ENCODE measurements at regions of chr13 and their contacts with region 1.

Region 1: DNA sequence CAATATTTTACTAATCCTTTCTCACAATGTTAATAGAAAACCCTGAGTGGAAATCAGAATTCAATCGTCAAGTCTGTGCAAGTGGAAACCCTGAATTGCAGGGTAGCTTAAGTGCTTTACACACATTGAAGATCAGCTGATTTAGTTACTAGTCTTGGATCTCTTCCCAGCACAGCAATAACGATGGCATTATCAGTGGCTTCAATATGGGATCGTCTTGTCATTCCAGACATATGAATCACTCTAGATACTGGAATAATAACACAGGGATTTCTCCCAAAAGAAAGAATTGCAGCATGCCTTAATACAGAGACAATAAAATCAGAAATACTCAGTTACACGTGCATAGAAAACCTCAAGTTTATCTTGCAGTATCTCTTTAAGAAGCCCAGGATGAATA is 12.6 kb upstream of the METTL21C start:
- DNase-seq: no peak
- ATAC-seq: no peak
- H3K4me3 ChIP-seq: no peak overlapping the region
- H3K27ac ChIP-seq: no peak overlapping the region
- H3K4me1 ChIP-seq: no peaks in the 10 kb centered on the region
- H3K27me3 ChIP-seq: no peaks in the 10 kb centered on the region; a peak in 1 of 5 replicates
- CTCF ChIP-seq: no peak
- EP300 ChIP-seq: no peak
- POLR2A ChIP-seq: no peak
- RAD21 ChIP-seq: no peak

Region 2: DNA sequence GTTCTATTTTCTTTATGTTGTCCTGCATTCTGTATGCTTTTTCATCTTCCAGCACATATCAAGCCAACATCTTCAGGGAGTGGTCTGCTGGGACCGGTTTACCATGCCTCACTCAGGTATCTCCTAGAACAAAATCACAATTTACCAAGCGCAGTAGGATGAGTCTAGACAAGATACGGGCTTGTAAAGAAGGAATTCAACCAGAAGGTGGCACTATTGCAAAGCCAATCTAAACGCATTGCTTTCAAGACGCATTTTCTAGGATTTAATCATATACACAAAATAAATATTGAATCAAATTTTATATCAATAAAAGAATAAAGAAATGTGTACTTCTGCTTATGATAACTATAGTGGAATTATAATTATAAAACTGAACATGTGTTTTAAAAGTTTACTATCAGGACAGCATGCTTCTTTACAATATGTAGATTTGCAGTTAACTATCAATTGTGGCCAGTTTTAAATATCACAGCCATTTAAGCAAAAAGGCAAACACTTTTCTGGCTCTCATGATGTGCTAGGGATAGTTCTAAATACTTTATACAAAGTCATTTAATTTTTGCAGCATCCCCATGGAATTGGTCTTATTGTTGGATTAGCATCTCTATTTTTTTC is 126.8 kb before region 1 on chr13:
- CTCF ChIA-PET with region 1: no interaction called
- POLR2A ChIA-PET with region 1: no interaction called
- in situ Hi-C with region 1: loop called (anchors 10 kb)
- intact Hi-C with region 1: no loop called
- DNase-seq: peak; percentile 27 to 69 (median 42)
- ATAC-seq: peak; percentile 84
- H3K4me3 ChIP-seq: no peak overlapping the region
- H3K27ac ChIP-seq: no peak overlapping the region
- H3K4me1 ChIP-seq: peaks cover 0 to 9% of the 10 kb centered on the region in 2 experiments; a peak in 3 of 5 replicates
- H3K27me3 ChIP-seq: no peaks in the 10 kb centered on the region
- CTCF ChIP-seq: peak; percentile 50 to 69 (median 59); a peak in 5 of 6 replicates
- EP300 ChIP-seq: no peak
- POLR2A ChIP-seq: no peak
- RAD21 ChIP-seq: peak; percentile 66 to 87